MCF 10A (cell line): ENCODE measurements at regions of chr1 and their contacts with region 1.

Region 1: DNA sequence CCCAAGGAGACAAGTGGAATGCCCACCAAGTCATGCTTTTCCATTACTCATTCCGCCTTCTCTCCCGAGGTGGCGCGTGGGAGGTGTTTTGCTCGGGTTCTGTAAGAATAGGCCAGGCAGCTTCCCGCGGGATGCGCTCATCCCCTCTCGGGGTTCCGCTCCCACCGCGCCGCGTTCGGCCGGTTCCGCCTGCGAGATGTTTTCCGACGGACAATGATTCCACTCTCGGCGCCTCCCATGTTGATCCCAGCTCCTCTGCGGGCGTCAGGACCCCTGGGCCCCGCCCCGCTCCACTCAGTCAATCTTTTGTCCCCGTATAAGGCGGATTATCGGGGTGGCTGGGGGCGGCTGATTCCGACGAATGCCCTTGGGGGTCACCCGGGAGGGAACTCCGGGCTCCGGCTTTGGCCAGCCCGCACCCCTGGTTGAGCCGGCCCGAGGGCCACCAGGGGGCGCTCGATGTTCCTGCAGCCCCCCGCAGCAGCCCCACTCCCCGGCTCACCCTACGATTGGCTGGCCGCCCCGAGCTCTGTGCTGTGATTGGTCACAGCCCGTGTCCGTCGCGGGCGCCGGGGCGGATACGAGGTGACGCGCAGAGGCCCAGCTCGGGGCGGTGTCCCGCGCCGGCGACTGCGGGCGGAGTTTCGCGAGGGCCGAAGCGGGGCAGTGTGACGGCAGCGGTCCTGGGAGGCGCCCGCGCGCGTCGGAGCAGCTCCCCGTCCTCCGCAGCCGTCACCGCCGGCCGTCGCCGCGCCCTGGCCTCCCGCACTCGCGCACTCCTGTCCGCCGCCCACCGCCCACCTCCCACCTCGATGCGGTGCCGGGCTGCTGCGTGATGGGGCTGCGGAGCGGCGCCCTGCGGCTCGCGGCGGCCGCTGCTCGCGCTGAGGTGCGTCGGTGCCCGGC is at the start of gene KIF1B:
- DNase-seq: peak; percentile 97
- H3K4me3 Mint-ChIP-seq: peak within 1 kb of the TSS; percentile 98
- H3K27ac Mint-ChIP-seq: peak within 1 kb of the TSS; percentile 84
- H3K4me1 Mint-ChIP-seq: peaks cover 18% of the 10 kb centered on the region
- H3K27me3 Mint-ChIP-seq: no peaks in the 10 kb centered on the region
- CTCF ChIP-seq: peak; percentile 97
- total RNA-seq, gene KIF1B: 34.2 and 35.9 TPM in 2 replicates

Region 2: GRCh38 chr1:10128101-10128765 is 81.9 kb before region 1 on chr1:
- CTCF ChIA-PET with region 1: no interaction called
- POLR2A ChIA-PET with region 1: no interaction called
- intact Hi-C with region 1: no loop called
- DNase-seq: no peak
- H3K4me3 Mint-ChIP-seq: no peak overlapping the region
- H3K27ac Mint-ChIP-seq: no peak overlapping the region
- H3K4me1 Mint-ChIP-seq: no peaks in the 10 kb centered on the region
- H3K27me3 Mint-ChIP-seq: no peaks in the 10 kb centered on the region
- CTCF ChIP-seq: no peak

Region 3: GRCh38 chr1:10253755-10254154 is 43.6 kb after region 1 on chr1:
- CTCF ChIA-PET with region 1: interaction called, 3 read pairs
- POLR2A ChIA-PET with region 1: interaction called, 34 read pairs
- intact Hi-C with region 1: no loop called
- DNase-seq: no peak
- H3K4me3 Mint-ChIP-seq: no peak overlapping the region
- H3K27ac Mint-ChIP-seq: peak overlapping the region; percentile 41
- H3K4me1 Mint-ChIP-seq: peaks cover 12% of the 10 kb centered on the region
- H3K27me3 Mint-ChIP-seq: no peaks in the 10 kb centered on the region
- CTCF ChIP-seq: no peak

Region 4: GRCh38 chr1:10267319-10267718 is 57.2 kb after region 1 on chr1:
- CTCF ChIA-PET with region 1: interaction called, 8 read pairs
- POLR2A ChIA-PET with region 1: interaction called, 16 read pairs
- intact Hi-C with region 1: no loop called
- DNase-seq: peak; percentile 17
- H3K4me3 Mint-ChIP-seq: no peak overlapping the region
- H3K27ac Mint-ChIP-seq: no peak overlapping the region
- H3K4me1 Mint-ChIP-seq: no peaks in the 10 kb centered on the region
- H3K27me3 Mint-ChIP-seq: no peaks in the 10 kb centered on the region
- CTCF ChIP-seq: no peak

Region 5: GRCh38 chr1:10338047-10338446 is 127.9 kb after region 1 on chr1:
- CTCF ChIA-PET with region 1: interaction called, 3 read pairs
- POLR2A ChIA-PET with region 1: interaction called, 10 read pairs
- intact Hi-C with region 1: loop called (anchors 2 kb)
- DNase-seq: peak; percentile 42
- H3K4me3 Mint-ChIP-seq: no peak overlapping the region
- H3K27ac Mint-ChIP-seq: no peak overlapping the region
- H3K4me1 Mint-ChIP-seq: peaks cover 8% of the 10 kb centered on the region
- H3K27me3 Mint-ChIP-seq: no peaks in the 10 kb centered on the region
- CTCF ChIP-seq: peak; percentile 61